CD4-positive, alpha-beta memory T cell (primary cell): ENCODE measurements at regions of chr22 and their contacts with region 1.

Region 1: DNA sequence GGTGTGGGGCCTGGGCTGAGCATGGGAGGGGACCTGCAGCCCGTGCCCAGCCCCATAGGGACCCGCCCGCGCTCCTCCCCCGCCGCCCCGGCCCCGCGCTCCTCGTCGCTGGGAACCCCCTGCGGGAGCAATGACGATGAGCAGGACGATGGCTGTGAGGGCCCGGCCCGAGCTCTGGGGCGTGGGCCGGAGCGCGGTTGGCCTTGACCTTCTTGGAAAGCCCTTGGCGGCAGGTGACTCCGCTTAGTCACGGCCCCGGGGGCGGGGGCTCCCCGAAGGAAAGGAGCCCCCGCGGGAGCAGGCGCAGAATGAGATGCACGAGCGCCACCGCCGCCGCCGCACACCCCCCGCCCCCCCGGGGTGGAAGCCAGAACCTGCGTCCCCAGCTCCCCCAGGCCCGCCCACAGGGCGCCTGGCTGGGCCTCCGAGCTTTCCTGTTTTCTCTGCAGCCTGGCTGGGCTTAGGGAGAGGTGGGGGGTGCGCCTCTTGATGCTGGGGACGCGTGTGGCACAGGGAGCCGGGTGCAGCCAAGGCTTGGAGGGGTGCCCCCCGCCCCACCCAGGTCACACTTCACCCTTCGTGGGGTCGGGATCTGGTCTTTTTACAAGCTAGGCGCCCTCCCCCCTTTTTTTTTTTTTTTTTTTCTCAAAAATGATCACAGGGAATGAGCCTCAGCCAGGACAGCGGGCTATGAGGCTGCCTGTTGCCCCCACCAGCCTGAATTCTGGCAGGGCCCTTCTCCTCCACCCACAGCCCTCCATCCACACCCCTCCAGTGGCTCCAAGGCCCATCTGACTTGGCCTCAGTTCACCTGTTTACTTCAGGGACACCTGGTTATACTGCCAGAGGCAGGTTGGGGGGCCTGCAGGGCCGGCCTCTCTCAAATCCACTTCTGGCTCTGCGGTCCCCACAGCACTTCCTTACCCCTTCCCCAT is 17.9 kb downstream of the CRELD2 start:
- DNase-seq: peak; percentile 89 to 98 (median 91)
- H3K4me3 ChIP-seq: peak overlapping the region in 1 of 2 donors; percentile 18
- H3K4me3 Mint-ChIP-seq: peak overlapping the region; percentile 45 to 74 (median 68)
- H3K27ac ChIP-seq: peak overlapping the region; percentile 90
- H3K27ac Mint-ChIP-seq: peak overlapping the region; percentile 88 to 95 (median 90)
- H3K4me1 ChIP-seq: peaks cover 46% of the 10 kb centered on the region
- H3K4me1 Mint-ChIP-seq: peaks cover 9 to 42% (median 17%) of the 10 kb centered on the region in 4 donors
- H3K27me3 ChIP-seq: no peaks in the 10 kb centered on the region
- H3K27me3 Mint-ChIP-seq: no peaks in the 10 kb centered on the region

Region 2: DNA sequence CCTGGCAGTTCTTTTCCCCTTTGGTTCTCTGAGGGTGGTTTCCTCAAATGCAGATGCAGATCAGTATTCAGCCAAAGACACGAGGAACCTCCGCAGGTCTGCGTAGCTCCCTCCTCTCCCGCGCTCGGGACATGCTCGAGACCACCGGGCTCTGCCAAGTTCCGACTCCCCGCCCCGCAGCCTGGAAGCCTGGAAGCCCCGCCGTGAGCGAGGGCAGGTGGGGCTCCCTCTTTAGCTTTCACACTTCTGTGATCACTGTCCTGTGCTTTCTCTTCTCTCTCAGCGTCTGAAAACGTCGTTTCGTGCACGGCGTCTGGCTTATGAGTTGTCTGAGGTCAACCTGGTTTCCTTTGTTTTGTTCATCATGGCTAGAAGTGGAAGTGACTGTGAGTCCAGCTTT is 56.0 kb before region 1 on chr22:
- CTCF ChIA-PET with region 1: no interaction called
- POLR2A ChIA-PET with region 1: no interaction called
- intact Hi-C with region 1: no loop called
- DNase-seq: no peak
- H3K4me3 ChIP-seq: no peak overlapping the region
- H3K4me3 Mint-ChIP-seq: peak overlapping the region in 3 of 8 donors; percentile 7 to 67 (median 13)
- H3K27ac ChIP-seq: no peak overlapping the region
- H3K27ac Mint-ChIP-seq: peak overlapping the region; percentile 6 to 71 (median 63)
- H3K4me1 ChIP-seq: peaks cover 23% of the 10 kb centered on the region
- H3K4me1 Mint-ChIP-seq: peaks cover 30 to 58% (median 38%) of the 10 kb centered on the region in 4 donors
- H3K27me3 ChIP-seq: no peaks in the 10 kb centered on the region
- H3K27me3 Mint-ChIP-seq: no peaks in the 10 kb centered on the region

Region 3: DNA sequence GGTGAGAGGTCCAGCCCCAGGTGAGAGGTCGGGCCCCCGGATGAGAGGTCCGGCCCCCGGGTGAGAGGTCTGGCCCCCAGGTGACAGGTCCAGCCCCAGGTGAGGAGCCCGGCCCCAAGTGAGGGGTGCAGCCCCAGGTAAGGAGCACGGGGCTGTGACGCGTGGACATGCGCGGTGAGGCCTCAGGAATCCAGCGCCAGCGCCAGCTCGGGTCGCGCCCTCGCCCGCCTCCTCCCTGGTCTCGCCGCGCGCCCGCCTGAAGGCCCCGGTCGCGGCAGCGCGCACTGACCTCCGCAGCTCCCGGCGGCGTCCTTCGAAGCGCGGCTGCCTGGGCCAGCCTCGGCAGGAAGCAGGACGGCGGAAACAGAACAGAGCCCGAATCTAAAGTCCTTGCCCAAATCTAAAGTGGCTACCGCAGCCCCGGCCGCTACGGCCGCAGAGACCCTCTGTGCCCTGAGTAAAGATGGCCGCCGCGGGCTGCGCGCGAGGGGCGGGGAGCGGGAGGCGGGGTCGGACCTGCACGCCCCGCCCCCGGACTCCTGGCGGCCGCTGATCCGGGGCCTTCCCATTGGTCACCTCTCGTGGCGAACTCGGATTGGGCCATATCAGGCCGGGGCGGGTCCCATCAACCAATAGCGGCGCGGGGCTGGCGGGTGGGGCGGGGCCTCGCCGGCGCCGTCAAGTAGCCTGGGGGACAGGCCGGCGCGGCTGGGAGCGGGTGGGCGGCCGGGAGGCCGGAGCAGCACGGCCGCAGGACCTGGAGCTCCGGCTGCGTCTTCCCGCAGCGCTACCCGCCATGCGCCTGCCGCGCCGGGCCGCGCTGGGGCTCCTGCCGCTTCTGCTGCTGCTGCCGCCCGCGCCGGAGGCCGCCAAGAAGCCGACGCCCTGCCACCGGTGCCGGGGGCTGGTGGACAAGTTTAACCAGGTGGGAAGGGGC is 18.0 kb before region 1 on chr22 and contains the starts of genes ALG12 and CRELD2:
- CTCF ChIA-PET with region 1: no interaction called
- POLR2A ChIA-PET with region 1: interaction called, 5 read pairs
- intact Hi-C with region 1: loop called (anchors 1 kb)
- DNase-seq: peak; percentile 95 to 97 (median 95)
- H3K4me3 ChIP-seq: peak within 1 kb of the TSS; percentile 29 to 85
- H3K4me3 Mint-ChIP-seq: peak within 1 kb of the TSS; percentile 86 to 96 (median 94)
- H3K27ac ChIP-seq: peak within 1 kb of the TSS; percentile 88
- H3K27ac Mint-ChIP-seq: peak within 1 kb of the TSS; percentile 79 to 98 (median 95)
- H3K4me1 ChIP-seq: peaks cover 25% of the 10 kb centered on the region
- H3K4me1 Mint-ChIP-seq: peaks cover 13 to 39% (median 22%) of the 10 kb centered on the region in 4 donors
- H3K27me3 ChIP-seq: no peaks in the 10 kb centered on the region
- H3K27me3 Mint-ChIP-seq: no peaks in the 10 kb centered on the region
- total RNA-seq, gene ALG12: 19.6 to 27.2 TPM
- total RNA-seq, gene CRELD2: 36.0 to 36.2 TPM

Region 4: GRCh38 chr22:49951000-49951677 is 14.9 kb after region 1 on chr22:
- CTCF ChIA-PET with region 1: no interaction called
- POLR2A ChIA-PET with region 1: interaction called, 10 read pairs
- intact Hi-C with region 1: no loop called
- DNase-seq: no peak
- H3K4me3 ChIP-seq: no peak overlapping the region
- H3K4me3 Mint-ChIP-seq: no peak overlapping the region
- H3K27ac ChIP-seq: no peak overlapping the region
- H3K27ac Mint-ChIP-seq: no peak overlapping the region
- H3K4me1 ChIP-seq: peaks cover 6% of the 10 kb centered on the region
- H3K4me1 Mint-ChIP-seq: peaks cover 0 to 9% (median 1%) of the 10 kb centered on the region in 4 donors
- H3K27me3 ChIP-seq: no peaks in the 10 kb centered on the region
- H3K27me3 Mint-ChIP-seq: no peaks in the 10 kb centered on the region

Region 5: GRCh38 chr22:49970528-49971231 is 34.4 kb after region 1 on chr22:
- CTCF ChIA-PET with region 1: interaction called, 4 read pairs
- POLR2A ChIA-PET with region 1: interaction called, 16 read pairs
- intact Hi-C with region 1: loop called (anchors 2 kb)
- DNase-seq: peak; percentile 88 to 99 (median 89)
- H3K4me3 ChIP-seq: peak overlapping the region in 1 of 2 donors; percentile 49
- H3K4me3 Mint-ChIP-seq: peak overlapping the region; percentile 77 to 83 (median 80)
- H3K27ac ChIP-seq: peak overlapping the region; percentile 56
- H3K27ac Mint-ChIP-seq: peak overlapping the region; percentile 63 to 98 (median 94)
- H3K4me1 ChIP-seq: peaks cover 36% of the 10 kb centered on the region
- H3K4me1 Mint-ChIP-seq: peaks cover 13 to 29% (median 14%) of the 10 kb centered on the region in 4 donors
- H3K27me3 ChIP-seq: no peaks in the 10 kb centered on the region
- H3K27me3 Mint-ChIP-seq: peaks cover 0 to 4% of the 10 kb centered on the region in 2 donors